Tibial artery (tissue), 4 donors: ENCODE measurements at regions of chr3 and their contacts with region 1.

Region 1: GRCh38 chr3:121274411-121274810 is 271.4 kb downstream of the POLQ start:
- DNase-seq: no peak
- H3K4me3 ChIP-seq: no peak overlapping the region
- H3K27ac ChIP-seq: no peak overlapping the region
- H3K4me1 ChIP-seq: no peaks in the 10 kb centered on the region
- H3K27me3 ChIP-seq: no peaks in the 10 kb centered on the region
- CTCF ChIP-seq: no peak

Region 2: DNA sequence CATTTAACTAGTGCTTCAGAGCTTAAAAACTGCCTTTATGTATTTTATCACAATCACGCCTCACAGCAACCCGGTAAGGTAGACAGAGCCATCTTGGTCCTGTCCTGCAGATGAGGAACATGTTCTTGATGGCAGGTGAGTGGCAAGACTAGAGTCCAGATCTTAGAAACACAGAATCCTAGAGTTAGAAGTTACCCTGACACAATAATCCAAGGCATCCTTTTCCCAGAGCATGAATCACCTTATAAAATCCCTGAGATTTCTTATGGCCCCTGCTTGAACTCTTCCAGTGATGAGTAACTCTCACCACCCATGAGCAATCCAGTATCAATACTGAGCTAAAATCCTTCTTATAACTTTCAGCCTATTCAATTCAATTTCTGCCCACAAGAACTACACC is 1630.9 kb before region 1 on chr3:
- intact Hi-C with region 1: loop called (anchors 10 kb)
- DNase-seq: no peak
- H3K4me3 ChIP-seq: no peak overlapping the region
- H3K27ac ChIP-seq: no peak overlapping the region
- H3K4me1 ChIP-seq: peaks cover 0 to 18% (median 3%) of the 10 kb centered on the region in 4 donors
- H3K27me3 ChIP-seq: no peaks in the 10 kb centered on the region
- CTCF ChIP-seq: no peak

Region 3: DNA sequence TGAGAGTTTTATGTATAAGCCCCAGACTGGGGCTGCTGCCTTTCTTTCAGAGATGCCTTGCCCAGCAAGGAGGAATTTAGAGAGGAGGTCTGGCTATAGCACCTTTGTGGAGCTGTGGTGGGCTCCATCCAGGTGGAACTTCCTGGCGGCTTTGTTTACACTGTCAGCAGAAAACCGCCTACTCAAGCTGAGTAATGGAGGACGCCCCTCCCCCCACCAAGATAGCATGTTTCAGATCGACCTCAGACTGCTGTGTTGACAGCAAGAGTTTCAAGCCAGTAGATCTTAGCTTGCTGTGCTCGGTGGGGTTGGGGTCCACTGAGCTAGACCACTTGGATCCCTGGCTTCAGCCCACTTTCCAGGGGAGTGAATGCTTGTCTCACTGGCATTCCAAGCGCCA is 210.8 kb before region 1 on chr3:
- intact Hi-C with region 1: no loop called
- DNase-seq: no peak
- H3K4me3 ChIP-seq: no peak overlapping the region
- H3K27ac ChIP-seq: no peak overlapping the region
- H3K4me1 ChIP-seq: no peaks in the 10 kb centered on the region
- H3K27me3 ChIP-seq: no peaks in the 10 kb centered on the region
- CTCF ChIP-seq: no peak